Adrenal gland (tissue), 19 donors: ENCODE measurements at regions of chr1 and their contacts with region 1.

Region 1: DNA sequence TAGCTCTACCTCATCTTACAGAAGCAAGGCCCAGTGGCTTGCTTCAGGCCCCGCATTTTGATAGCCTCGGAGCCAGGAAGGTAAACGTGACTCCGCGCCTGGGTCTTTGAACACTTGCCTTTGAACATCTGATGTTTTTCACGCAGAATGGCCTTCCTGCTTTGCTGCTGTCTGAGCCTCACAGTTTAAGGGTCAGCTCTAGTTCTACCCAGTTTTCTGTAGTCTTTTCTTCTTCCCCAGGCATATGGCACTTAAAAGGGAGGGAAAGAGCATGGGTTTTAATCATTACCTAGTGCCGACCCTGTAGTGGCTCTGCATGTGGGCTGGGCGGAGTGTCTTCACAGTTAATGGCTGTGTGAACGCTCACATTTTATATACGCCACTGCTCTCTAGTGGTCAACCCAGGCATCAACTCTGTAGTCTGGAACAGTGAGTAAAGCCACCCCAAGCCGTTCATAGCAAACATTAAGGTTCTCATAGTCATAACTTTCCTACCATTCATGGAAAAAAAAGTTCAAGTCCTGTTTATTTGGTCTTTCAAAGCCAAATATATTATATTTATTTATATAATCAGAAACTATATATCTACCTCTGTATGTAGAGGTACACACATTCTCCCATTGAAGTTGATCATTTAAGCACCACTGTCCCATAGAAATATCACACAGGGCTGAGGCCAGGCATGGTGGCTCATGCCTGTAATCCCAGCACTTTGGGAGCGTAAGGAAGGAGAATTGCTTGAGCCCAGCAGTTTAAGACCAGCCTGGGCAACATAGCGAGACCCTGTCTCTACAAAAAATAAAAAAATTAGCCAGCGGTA is 78.1 kb downstream of the IER5 start:
- DNase-seq: peak; percentile 63 to 92 (median 70)
- H3K4me3 ChIP-seq: no peak overlapping the region
- H3K27ac ChIP-seq: no peak overlapping the region
- H3K4me1 ChIP-seq: no peaks in the 10 kb centered on the region
- H3K27me3 ChIP-seq: no peaks in the 10 kb centered on the region
- CTCF ChIP-seq: peak; percentile 81 to 91 (median 83)
- POLR2A ChIP-seq: no peak

Region 2: GRCh38 chr1:180527101-180527669 is 639.4 kb before region 1 on chr1:
- intact Hi-C with region 1: loop called in 1 of 2 experiments (anchors 10 kb)
- DNase-seq: peak in 4 of 7 donors; percentile 19 to 58 (median 35)
- H3K4me3 ChIP-seq: no peak overlapping the region
- H3K27ac ChIP-seq: no peak overlapping the region
- H3K4me1 ChIP-seq: no peaks in the 10 kb centered on the region
- H3K27me3 ChIP-seq: no peaks in the 10 kb centered on the region
- CTCF ChIP-seq: no peak
- POLR2A ChIP-seq: no peak

Region 3: GRCh38 chr1:180898441-180899219 is 268.0 kb before region 1 on chr1:
- intact Hi-C with region 1: loop called in 1 of 2 experiments (anchors 10 kb)
- DNase-seq: peak in 1 of 7 donors; percentile 4
- H3K4me3 ChIP-seq: no peak overlapping the region
- H3K27ac ChIP-seq: no peak overlapping the region
- H3K4me1 ChIP-seq: no peaks in the 10 kb centered on the region
- H3K27me3 ChIP-seq: no peaks in the 10 kb centered on the region
- CTCF ChIP-seq: no peak
- POLR2A ChIP-seq: no peak

Region 4: GRCh38 chr1:181105134-181106021 is 61.2 kb before region 1 on chr1:
- intact Hi-C with region 1: no loop called
- DNase-seq: peak; percentile 95 to 97 (median 96)
- H3K4me3 ChIP-seq: peak overlapping the region; percentile 16 to 73 (median 62)
- H3K27ac ChIP-seq: peak overlapping the region in 4 of 5 donors; percentile 17 to 89 (median 77)
- H3K4me1 ChIP-seq: peaks cover 7 to 43% of the 10 kb centered on the region in 2 donors
- H3K27me3 ChIP-seq: no peaks in the 10 kb centered on the region
- CTCF ChIP-seq: no peak
- POLR2A ChIP-seq: peak; percentile 70 to 78

Region 5: GRCh38 chr1:181485287-181486097 is 318.9 kb after region 1 on chr1:
- intact Hi-C with region 1: no loop called
- DNase-seq: peak in 1 of 7 donors; percentile 3
- H3K4me3 ChIP-seq: no peak overlapping the region
- H3K27ac ChIP-seq: no peak overlapping the region
- H3K4me1 ChIP-seq: peaks cover 0 to 4% of the 10 kb centered on the region in 2 donors
- H3K27me3 ChIP-seq: peaks cover 65% of the 10 kb centered on the region
- CTCF ChIP-seq: no peak
- POLR2A ChIP-seq: no peak